GM10248 (cell line): ENCODE measurements at regions of chr7 and their contacts with region 1.

Region 1: DNA sequence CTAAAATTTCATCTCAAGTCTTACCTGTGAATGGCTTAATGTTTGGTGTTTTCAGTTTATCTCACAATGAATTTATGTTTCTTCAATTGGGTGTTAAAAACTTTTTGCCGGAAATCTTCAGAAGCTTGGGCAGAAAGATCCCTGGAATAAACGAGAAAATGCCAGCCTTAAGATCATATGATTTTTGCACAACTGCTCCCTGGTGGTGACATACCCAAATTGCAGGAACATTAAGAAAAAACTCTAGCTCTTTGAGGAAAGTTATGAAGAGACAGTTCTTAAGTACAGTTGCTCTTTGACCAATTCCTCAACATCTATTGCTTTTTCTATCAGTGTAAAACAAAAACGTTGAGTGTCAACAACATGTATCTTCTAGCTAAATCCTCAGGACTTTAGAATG is 48.2 kb upstream of the CREB5 start:
- DNase-seq: no peak
- CTCF ChIP-seq: no peak

Region 2: DNA sequence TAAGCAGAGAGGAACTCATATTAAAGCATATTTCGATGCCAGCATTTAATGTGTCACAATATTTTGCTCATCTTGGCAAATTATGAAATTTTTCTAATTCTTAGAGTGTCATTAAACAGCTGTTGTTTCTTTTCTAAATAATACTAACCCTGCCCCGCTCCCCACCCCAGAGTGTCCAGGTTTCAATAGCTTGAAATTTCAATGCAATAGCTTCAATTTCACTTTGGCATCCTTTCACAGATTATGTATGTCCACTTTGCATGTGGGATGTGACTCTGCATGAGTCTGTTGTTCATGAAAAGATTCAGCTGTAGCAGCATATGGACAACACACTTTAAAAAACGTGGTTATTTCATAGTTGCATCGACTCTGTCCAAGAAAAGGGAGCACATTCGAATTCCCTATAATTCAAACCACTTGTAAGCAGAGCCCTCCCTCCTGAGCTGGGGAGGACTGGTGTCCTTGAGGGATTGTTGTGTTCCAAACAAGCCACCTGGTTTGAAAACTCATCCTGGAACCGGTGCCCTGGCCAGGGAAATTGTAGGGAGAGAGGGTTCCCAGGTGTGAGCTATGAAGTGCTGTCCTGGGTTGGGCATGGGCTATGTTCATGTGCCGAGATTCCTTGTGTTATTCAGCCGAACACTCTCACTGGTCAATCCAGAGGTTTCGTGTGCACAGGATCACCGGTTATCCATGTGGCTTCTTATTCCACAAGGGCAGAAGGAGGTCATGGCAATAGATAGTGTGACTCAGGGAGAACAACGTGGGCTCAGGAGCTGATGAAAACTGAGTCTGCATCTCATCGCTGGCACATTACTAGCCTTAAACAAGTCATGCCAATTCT is 16.4 kb before region 1 on chr7:
- CTCF ChIA-PET with region 1: interaction called, 20 read pairs
- POLR2A ChIA-PET with region 1: no interaction called
- DNase-seq: no peak
- CTCF ChIP-seq: no peak